A673 (cell line): ENCODE measurements at regions of chr7 and their contacts with region 1.

Region 1: DNA sequence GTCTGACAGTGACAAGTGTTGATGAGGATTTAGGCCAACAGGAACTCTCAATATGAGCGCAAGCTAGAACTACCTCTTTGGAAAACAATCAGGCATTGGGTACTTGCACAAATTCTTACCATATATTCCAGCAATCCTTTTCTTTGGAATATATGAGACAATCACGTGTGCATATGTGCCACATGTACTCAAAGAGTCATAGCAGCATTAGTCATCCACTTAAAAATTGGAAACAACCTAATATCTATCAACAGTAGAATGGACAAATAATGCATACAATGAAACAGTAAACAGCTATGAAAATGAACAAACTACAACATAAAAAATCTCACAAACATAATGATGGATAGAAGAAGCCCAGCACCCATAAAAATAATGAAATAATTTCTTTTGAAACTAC is 179.7 kb downstream of the GLI3 start:
- DNase-seq: no peak
- H3K4me3 ChIP-seq: no peak overlapping the region
- H3K27ac ChIP-seq: no peak overlapping the region
- H3K4me1 ChIP-seq: no peaks in the 10 kb centered on the region
- H3K27me3 ChIP-seq: no peaks in the 10 kb centered on the region
- CTCF ChIP-seq: no peak

Region 2: DNA sequence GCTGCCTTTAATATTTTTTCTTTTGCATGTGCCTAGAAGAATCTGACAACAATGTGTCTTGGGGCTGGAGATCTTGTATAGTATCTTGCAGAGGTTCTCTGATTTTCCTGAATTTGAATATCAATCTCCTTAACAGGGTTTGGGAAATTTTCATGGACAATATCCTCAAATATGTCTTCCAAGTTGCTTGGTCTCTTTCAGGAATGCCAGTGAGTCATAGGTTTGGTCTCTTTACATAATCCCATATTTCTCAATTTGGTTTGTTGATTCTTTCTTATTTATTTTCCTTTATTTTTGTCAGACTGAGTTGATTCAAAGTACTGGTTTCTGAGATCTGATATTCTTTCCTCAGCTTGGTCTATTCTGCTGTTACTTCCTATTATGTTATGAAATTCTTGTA is 388.4 kb after region 1 on chr7:
- CTCF ChIA-PET with region 1: no interaction called
- POLR2A ChIA-PET with region 1: interaction called, 11 read pairs
- intact Hi-C with region 1: no loop called
- DNase-seq: no peak
- H3K4me3 ChIP-seq: no peak overlapping the region
- H3K27ac ChIP-seq: no peak overlapping the region
- H3K4me1 ChIP-seq: no peaks in the 10 kb centered on the region
- H3K27me3 ChIP-seq: no peaks in the 10 kb centered on the region
- CTCF ChIP-seq: no peak